ENCODE measurements at regions of chr1 and their contacts with region 1.

Region 1: GRCh38 chr1:213475841-213476240 is 424.8 kb downstream of the RPS6KC1 start:
- DNase-seq: no peak
- ATAC-seq: no peak
- H3K4me3 ChIP-seq: no peak overlapping the region
- H3K27ac ChIP-seq: no peak overlapping the region
- H3K4me1 ChIP-seq: no peaks in the 10 kb centered on the region
- H3K27me3 ChIP-seq: no peaks in the 10 kb centered on the region; a peak in 1 of 4 replicates
- CTCF ChIP-seq: no peak
- EP300 ChIP-seq: no peak
- POLR2A ChIP-seq: no peak
- RAD21 ChIP-seq: no peak

Region 2: GRCh38 chr1:213457097-213457680 is 18.7 kb before region 1 on chr1:
- CTCF ChIA-PET with region 1: no interaction called
- POLR2A ChIA-PET with region 1: no interaction called
- RAD21 ChIA-PET with region 1: no interaction called
- SMC1A ChIA-PET with region 1: no interaction called
- in situ Hi-C with region 1: no loop called
- intact Hi-C with region 1: no loop called
- DNase-seq: no peak
- ATAC-seq: no peak
- H3K4me3 ChIP-seq: no peak overlapping the region
- H3K27ac ChIP-seq: no peak overlapping the region
- H3K4me1 ChIP-seq: no peaks in the 10 kb centered on the region
- H3K27me3 ChIP-seq: no peaks in the 10 kb centered on the region; a peak in 1 of 4 replicates
- CTCF ChIP-seq: no peak
- EP300 ChIP-seq: no peak
- POLR2A ChIP-seq: no peak
- RAD21 ChIP-seq: no peak

Region 3: GRCh38 chr1:213507472-213508223 is 31.8 kb after region 1 on chr1:
- CTCF ChIA-PET with region 1: no interaction called
- POLR2A ChIA-PET with region 1: no interaction called
- RAD21 ChIA-PET with region 1: no interaction called
- SMC1A ChIA-PET with region 1: no interaction called
- in situ Hi-C with region 1: no loop called
- intact Hi-C with region 1: loop called (anchors 2 kb)
- DNase-seq: no peak
- ATAC-seq: no peak
- H3K4me3 ChIP-seq: no peak overlapping the region
- H3K27ac ChIP-seq: no peak overlapping the region
- H3K4me1 ChIP-seq: no peaks in the 10 kb centered on the region
- H3K27me3 ChIP-seq: peaks cover 0 to 1% of the 10 kb centered on the region in 2 experiments; a peak in 1 of 4 replicates
- CTCF ChIP-seq: no peak
- EP300 ChIP-seq: no peak
- POLR2A ChIP-seq: no peak
- RAD21 ChIP-seq: no peak